Activated CD4-positive, alpha-beta T cell treated with anti-CD3 and anti-CD28 coated beads, Interleukin-2, amount 10 ng/mL, durations not matched to agents 24 days and 14 days (primary cell): ENCODE measurements at regions of chr4 and their contacts with region 1.

Region 1: DNA sequence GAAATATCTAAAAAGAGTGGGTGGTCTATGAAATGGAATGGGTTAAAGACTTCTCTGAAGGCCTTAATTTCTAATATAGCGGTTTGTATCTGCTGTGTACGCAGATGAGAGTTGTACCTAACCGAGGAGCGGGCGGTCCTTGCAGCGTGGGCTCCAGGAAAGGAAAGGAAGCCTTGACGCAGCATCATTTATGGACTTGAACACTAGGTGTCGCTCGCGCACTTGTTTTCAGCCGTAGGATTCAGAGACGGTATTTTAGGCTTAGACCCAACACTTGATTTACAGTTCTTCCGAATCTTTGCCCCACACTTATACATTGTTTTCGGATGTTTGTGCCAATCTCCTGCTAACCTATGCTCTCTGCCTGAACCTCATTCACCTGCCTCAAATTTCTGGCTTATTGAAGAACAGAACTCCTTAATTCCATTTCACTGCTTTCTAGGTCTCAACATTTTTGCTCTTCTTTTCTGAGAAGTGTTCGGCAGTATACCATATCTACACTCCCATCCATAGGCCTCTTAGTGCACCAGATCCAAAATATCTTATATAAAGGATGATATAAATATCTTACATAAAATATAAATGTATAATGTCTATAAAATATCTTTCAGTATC is 48.9 kb upstream of the AADAT start:
- DNase-seq: peak; percentile 90
- H3K4me3 Mint-ChIP-seq: no peak overlapping the region
- H3K27ac Mint-ChIP-seq: no peak overlapping the region
- H3K4me1 Mint-ChIP-seq: peaks cover 2% of the 10 kb centered on the region
- H3K27me3 Mint-ChIP-seq: no peaks in the 10 kb centered on the region

Region 2: GRCh38 chr4:170122252-170122651 is 16.4 kb before region 1 on chr4:
- intact Hi-C with region 1: no loop called
- DNase-seq: no peak
- H3K4me3 Mint-ChIP-seq: no peak overlapping the region
- H3K27ac Mint-ChIP-seq: no peak overlapping the region
- H3K4me1 Mint-ChIP-seq: no peaks in the 10 kb centered on the region
- H3K27me3 Mint-ChIP-seq: no peaks in the 10 kb centered on the region

Region 3: GRCh38 chr4:170162416-170162815 is 23.7 kb after region 1 on chr4:
- intact Hi-C with region 1: no loop called
- DNase-seq: no peak
- H3K4me3 Mint-ChIP-seq: no peak overlapping the region
- H3K27ac Mint-ChIP-seq: no peak overlapping the region
- H3K4me1 Mint-ChIP-seq: no peaks in the 10 kb centered on the region
- H3K27me3 Mint-ChIP-seq: no peaks in the 10 kb centered on the region

Region 4: DNA sequence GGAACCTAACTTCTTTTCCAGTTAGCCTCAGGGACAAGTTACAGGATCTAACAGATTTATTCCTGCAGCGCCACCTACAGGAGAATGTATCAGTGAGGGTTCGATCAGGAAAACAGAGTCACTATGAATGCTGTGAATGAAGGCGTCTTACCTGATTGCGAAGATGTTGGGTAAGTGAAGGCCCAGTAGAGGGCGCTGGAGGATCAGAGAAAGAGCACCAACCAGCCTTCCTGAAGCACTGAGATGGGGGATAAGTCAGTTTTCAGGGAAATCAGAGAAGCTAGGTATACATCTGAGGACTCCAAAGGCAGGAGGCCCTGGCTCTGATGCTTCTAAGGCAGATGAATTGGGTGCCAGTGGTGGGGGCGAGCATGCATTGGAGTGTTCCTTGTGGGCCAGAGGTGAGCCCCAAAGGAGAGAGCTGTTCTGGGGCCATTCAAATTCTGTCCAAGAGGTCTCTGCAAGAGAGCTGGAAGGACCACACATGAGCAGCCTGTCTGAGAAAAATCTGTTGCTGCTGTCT is 121.0 kb after region 1 on chr4:
- intact Hi-C with region 1: loop called (anchors 2 kb)
- DNase-seq: peak; percentile 82
- H3K4me3 Mint-ChIP-seq: no peak overlapping the region
- H3K27ac Mint-ChIP-seq: no peak overlapping the region
- H3K4me1 Mint-ChIP-seq: no peaks in the 10 kb centered on the region
- H3K27me3 Mint-ChIP-seq: no peaks in the 10 kb centered on the region

Region 5: GRCh38 chr4:170374770-170375169 is 236.1 kb after region 1 on chr4:
- intact Hi-C with region 1: loop called (anchors 10 kb)
- DNase-seq: peak; percentile 63
- H3K4me3 Mint-ChIP-seq: no peak overlapping the region
- H3K27ac Mint-ChIP-seq: no peak overlapping the region
- H3K4me1 Mint-ChIP-seq: no peaks in the 10 kb centered on the region
- H3K27me3 Mint-ChIP-seq: no peaks in the 10 kb centered on the region

Region 6: GRCh38 chr4:170853422-170854021 is 714.8 kb after region 1 on chr4:
- intact Hi-C with region 1: loop called (anchors 5 kb)
- DNase-seq: peak; percentile 68
- H3K4me3 Mint-ChIP-seq: no peak overlapping the region
- H3K27ac Mint-ChIP-seq: no peak overlapping the region
- H3K4me1 Mint-ChIP-seq: peaks cover 3% of the 10 kb centered on the region
- H3K27me3 Mint-ChIP-seq: no peaks in the 10 kb centered on the region